ENCODE measurements at regions of chr5 and their contacts with region 1.

Region 1: DNA sequence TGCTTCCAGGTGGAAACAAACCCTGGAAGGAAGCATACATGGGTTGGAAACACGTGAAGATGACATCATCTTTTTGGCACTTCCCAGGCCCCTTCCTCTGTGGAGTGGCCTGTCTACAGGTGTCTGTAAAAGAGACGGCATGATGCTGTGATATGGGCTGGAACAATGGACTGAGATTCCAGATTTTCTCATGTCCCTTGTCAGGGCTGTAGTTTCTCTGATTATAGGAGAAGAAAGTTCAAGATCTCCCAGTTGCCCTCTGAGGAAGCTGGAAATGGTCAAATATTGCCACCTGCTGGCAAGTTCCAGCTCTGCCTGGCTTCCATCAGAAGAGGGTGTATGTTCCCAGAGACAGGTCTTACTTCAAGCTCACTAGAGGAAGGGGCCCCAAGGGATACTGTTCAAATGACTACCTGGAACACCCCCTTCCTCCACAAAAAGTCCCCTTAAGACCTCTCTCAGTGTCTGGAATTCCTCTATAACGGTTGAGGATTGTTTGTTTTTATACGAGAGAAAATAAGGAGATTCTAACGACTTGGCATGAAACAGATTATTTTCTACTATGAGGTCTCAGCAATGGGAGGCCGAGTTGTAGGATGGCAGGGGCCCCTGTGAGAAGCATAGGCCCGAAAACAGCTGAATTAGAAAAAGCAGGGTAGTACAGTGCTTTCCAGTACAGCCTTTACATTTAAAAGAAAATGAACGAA is 7.3 kb upstream of the ANXA6 start:
- DNase-seq: peak; percentile 88
- H3K4me3 ChIP-seq: no peak overlapping the region
- H3K27ac ChIP-seq: no peak overlapping the region
- H3K4me1 ChIP-seq: peaks cover 21% of the 10 kb centered on the region
- CTCF ChIP-seq: peak; percentile 99

Region 2: DNA sequence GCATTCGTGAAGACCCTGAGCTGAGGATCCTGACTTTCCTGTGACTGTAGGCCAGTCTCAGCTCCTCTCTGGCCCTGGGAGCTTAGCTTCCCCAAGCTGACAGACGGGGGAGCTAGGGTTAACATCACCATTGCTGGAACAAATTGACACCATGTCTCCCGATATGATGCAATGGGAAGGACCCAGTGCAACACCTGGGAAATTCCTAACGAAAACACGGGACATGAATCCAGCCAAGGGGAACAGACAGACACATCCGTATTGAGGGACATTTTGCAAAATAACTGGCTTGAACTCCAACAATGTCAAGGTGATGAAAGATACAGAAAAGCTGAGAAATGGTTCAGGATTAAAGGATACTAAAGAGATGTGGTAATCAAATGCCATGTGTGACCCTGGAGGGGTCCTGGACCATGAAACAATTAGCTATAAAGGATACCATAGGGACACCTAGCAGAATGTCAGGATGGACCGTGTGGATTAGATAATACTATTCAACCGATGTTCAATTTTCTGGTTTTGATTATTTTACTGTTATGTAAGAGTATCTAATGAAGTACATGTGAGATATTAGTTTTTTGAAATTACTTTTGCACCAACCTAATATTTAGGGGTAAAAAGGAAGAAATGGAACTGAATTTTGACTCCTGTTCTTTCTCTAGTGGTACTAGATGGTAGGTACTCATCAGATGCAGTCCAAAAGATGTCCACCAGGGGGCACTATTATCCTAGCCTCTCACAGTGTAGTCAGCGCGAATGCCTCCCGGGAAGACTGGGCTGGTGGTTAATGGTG is 604.2 kb before region 1 on chr5:
- CTCF ChIA-PET with region 1: no interaction called
- POLR2A ChIA-PET with region 1: no interaction called
- intact Hi-C with region 1: loop called (anchors 2 kb)
- DNase-seq: peak; percentile 87
- H3K4me3 ChIP-seq: no peak overlapping the region
- H3K27ac ChIP-seq: no peak overlapping the region
- H3K4me1 ChIP-seq: peaks cover 26% of the 10 kb centered on the region
- CTCF ChIP-seq: peak; percentile 95

Region 3: DNA sequence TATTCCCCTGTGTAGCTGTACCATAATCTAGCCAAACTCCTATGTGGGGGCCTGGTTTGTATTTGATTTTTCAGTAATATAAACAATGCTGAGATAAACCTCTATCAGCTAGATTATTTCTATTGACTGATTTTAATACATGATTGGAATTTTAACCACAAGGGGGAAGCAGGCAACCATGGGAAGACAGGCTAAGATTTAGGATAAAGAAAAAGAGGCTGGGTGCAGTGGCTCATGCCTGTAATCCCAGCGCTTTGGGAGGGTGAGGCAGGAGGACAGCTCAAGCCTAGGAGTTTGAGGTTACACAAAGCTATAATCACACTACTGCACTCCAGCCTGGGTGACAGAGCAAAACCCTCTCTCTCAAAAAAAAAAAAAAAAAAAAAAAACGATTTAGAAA is 162.6 kb before region 1 on chr5:
- CTCF ChIA-PET with region 1: no interaction called
- POLR2A ChIA-PET with region 1: no interaction called
- intact Hi-C with region 1: loop called (anchors 2 kb)
- DNase-seq: peak; percentile 24
- H3K4me3 ChIP-seq: no peak overlapping the region
- H3K27ac ChIP-seq: no peak overlapping the region
- H3K4me1 ChIP-seq: no peaks in the 10 kb centered on the region
- CTCF ChIP-seq: peak; percentile 65

Region 4: GRCh38 chr5:151115274-151115905 is 49.4 kb before region 1 on chr5:
- CTCF ChIA-PET with region 1: interaction called, 10 read pairs
- POLR2A ChIA-PET with region 1: interaction called, 17 read pairs
- intact Hi-C with region 1: no loop called
- DNase-seq: peak; percentile 72
- H3K4me3 ChIP-seq: no peak overlapping the region
- H3K27ac ChIP-seq: no peak overlapping the region
- H3K4me1 ChIP-seq: peaks cover 9% of the 10 kb centered on the region
- CTCF ChIP-seq: peak; percentile 99

Region 5: GRCh38 chr5:151213800-151214613 is 49.2 kb after region 1 on chr5:
- CTCF ChIA-PET with region 1: interaction called, 5 read pairs
- POLR2A ChIA-PET with region 1: interaction called, 3 read pairs
- intact Hi-C with region 1: loop called (anchors 2 kb)
- DNase-seq: peak; percentile 97
- H3K4me3 ChIP-seq: peak overlapping the region; percentile 67
- H3K27ac ChIP-seq: peak overlapping the region; percentile 98
- H3K4me1 ChIP-seq: peaks cover 97% of the 10 kb centered on the region
- CTCF ChIP-seq: no peak

Region 6: GRCh38 chr5:151315998-151316597 is 151.3 kb after region 1 on chr5:
- CTCF ChIA-PET with region 1: no interaction called
- POLR2A ChIA-PET with region 1: no interaction called
- intact Hi-C with region 1: loop called (anchors 5 kb)
- DNase-seq: peak; percentile 72
- H3K4me3 ChIP-seq: no peak overlapping the region
- H3K27ac ChIP-seq: no peak overlapping the region
- H3K4me1 ChIP-seq: peaks cover 6% of the 10 kb centered on the region
- CTCF ChIP-seq: peak; percentile 98

Region 7: GRCh38 chr5:151427258-151427657 is 262.4 kb after region 1 on chr5:
- CTCF ChIA-PET with region 1: no interaction called
- POLR2A ChIA-PET with region 1: no interaction called
- intact Hi-C with region 1: no loop called
- DNase-seq: peak; percentile 55
- H3K4me3 ChIP-seq: no peak overlapping the region
- H3K27ac ChIP-seq: no peak overlapping the region
- H3K4me1 ChIP-seq: no peaks in the 10 kb centered on the region
- CTCF ChIP-seq: peak; percentile 41; the same call in 1 of the 2 replicates

Measured in OCI-LY7 (cell line).